MCF 10A (cell line): ENCODE measurements at regions of chr9 and their contacts with region 1.

Region 1: DNA sequence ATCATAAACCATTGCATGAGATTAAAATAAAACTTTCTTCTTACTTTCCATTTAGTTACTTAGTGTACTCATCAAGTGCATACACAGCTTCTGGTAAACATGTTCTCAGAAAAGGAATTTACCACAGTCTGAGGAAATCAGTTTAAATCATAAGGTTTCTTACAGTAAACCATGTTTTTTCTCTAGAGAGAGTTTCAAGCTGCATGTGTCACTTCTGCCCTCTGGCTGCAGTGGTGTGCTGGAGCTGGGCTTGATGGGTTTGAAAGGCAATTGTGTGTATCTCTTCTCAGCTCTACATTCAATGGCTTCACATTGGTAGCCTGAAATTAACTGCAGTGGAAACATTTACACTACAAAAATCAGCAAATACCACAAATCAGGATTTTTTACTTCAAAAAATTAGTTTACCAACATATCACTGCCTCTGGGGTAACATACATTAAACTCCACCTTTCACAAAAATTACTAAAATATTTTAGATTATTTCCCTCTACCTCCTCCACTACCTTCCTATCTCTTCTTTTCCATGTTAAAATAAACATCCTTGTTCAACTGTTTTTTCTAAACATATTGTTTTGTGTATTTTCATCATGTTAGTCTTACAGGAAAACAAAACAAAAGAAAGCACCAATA is 414.3 kb downstream of the ANXA1 start:
- DNase-seq: peak; percentile 27
- H3K4me3 Mint-ChIP-seq: no peak overlapping the region
- H3K27ac Mint-ChIP-seq: no peak overlapping the region
- H3K4me1 Mint-ChIP-seq: no peaks in the 10 kb centered on the region
- H3K27me3 Mint-ChIP-seq: peaks cover 69% of the 10 kb centered on the region
- CTCF ChIP-seq: peak; percentile 26

Region 2: GRCh38 chr9:73269430-73270101 is 296.4 kb before region 1 on chr9:
- CTCF ChIA-PET with region 1: interaction called, 7 read pairs
- POLR2A ChIA-PET with region 1: no interaction called
- intact Hi-C with region 1: loop called (anchors 1 kb)
- DNase-seq: peak; percentile 44
- H3K4me3 Mint-ChIP-seq: no peak overlapping the region
- H3K27ac Mint-ChIP-seq: no peak overlapping the region
- H3K4me1 Mint-ChIP-seq: peaks cover 8% of the 10 kb centered on the region
- H3K27me3 Mint-ChIP-seq: peaks cover 58% of the 10 kb centered on the region
- CTCF ChIP-seq: peak; percentile 36

Region 3: GRCh38 chr9:73497796-73498195 is 68.2 kb before region 1 on chr9:
- CTCF ChIA-PET with region 1: no interaction called
- POLR2A ChIA-PET with region 1: no interaction called
- intact Hi-C with region 1: loop called (anchors 10 kb)
- DNase-seq: no peak
- H3K4me3 Mint-ChIP-seq: no peak overlapping the region
- H3K27ac Mint-ChIP-seq: no peak overlapping the region
- H3K4me1 Mint-ChIP-seq: no peaks in the 10 kb centered on the region
- H3K27me3 Mint-ChIP-seq: peaks cover 35% of the 10 kb centered on the region
- CTCF ChIP-seq: no peak

Region 4: DNA sequence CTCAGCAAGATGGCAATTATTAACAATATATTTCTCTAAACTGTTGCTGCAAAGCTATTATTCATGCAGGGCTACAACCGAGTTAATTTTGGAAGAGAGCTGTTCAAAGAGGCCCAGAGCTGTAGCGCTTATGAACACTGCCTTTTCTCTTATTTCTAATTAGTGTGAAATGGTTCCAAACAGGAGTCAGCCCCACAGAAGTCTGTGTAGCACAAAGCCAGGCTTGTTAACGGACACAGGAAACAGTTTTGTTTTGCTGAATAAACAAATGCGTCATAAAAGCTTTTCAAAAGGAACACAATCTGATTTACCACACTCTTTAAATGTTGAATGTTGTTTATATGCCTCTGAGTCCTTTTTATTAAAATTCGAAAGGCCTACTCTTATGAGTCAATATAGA is 17.7 kb before region 1 on chr9:
- CTCF ChIA-PET with region 1: no interaction called
- POLR2A ChIA-PET with region 1: no interaction called
- intact Hi-C with region 1: loop called (anchors 1 kb)
- DNase-seq: no peak
- H3K4me3 Mint-ChIP-seq: no peak overlapping the region
- H3K27ac Mint-ChIP-seq: no peak overlapping the region
- H3K4me1 Mint-ChIP-seq: no peaks in the 10 kb centered on the region
- H3K27me3 Mint-ChIP-seq: peaks cover 62% of the 10 kb centered on the region
- CTCF ChIP-seq: no peak